Endothelial cell of umbilical vein (primary cell): ENCODE measurements at regions of chr13 and their contacts with region 1.

Region 1: DNA sequence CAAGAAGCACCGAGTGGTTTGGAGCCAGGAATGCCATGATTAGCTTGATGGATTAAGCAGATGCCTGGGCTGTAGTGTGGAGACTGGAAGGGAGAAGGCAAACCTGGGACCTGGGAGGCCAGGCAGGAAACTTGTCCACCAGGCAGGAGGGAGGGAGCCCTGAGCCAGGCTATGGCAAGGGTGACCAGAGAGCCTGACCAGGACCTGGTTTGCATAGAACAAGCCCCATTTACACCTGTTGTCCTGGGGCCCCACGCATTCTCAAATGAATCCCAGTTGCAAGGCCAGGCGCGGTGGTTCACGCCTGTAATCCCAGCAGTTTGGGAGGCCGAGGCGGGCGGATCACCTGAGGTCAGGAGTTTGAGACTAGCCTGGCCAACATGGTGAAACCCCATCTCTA is 50.2 kb upstream of the LATS2 start:
- DNase-seq: no peak
- H3K4me3 ChIP-seq: no peak overlapping the region
- H3K27ac ChIP-seq: no peak overlapping the region
- H3K4me1 ChIP-seq: no peaks in the 10 kb centered on the region
- H3K27me3 ChIP-seq: no peaks in the 10 kb centered on the region
- CTCF ChIP-seq: no peak
- POLR2A ChIP-seq: no peak

Region 2: DNA sequence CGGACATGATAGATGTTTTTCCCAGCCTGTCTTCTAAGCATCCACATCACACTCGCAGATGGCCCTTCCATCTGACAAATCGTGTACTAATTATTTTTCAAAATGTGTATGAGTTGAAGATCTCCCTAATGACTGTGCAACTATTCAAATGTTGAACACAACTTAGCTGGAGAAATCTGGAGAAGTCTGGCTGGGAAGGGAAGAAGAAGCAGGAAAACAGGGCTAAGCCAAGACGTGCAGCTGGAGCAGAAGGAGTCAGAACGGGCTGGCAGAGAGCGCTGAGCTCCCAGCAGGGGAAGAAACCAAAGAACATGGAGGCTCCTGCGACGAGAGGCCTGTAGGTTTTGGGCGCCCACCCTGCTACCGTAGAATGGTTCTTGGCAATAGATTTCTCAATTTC is 37.0 kb before region 1 on chr13:
- CTCF ChIA-PET with region 1: no interaction called
- POLR2A ChIA-PET with region 1: no interaction called
- dilution Hi-C with region 1: no loop called
- intact Hi-C with region 1: no loop called
- DNase-seq: peak; percentile 51
- H3K4me3 ChIP-seq: no peak overlapping the region
- H3K27ac ChIP-seq: peak overlapping the region; percentile 95
- H3K4me1 ChIP-seq: peaks cover 27% of the 10 kb centered on the region
- H3K27me3 ChIP-seq: no peaks in the 10 kb centered on the region
- CTCF ChIP-seq: no peak
- POLR2A ChIP-seq: no peak

Region 3: DNA sequence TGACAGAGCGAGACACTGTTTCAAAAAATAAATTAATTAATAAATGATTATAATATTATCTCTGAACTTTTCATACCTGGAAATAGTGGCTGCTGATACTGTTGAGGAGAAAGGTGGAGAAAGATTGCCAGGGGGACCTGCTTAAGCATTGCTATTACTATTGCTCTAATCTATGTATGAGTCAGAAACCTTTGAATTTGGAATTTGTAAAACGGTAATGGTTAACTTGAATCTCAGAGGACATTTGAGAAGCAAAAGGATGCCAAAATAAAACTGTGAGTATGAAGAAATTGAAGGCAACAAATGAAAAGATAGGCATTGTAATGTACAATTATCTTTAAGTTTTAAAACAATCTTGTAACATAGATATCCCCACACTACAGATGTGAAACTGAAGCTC is 70.1 kb after region 1 on chr13:
- CTCF ChIA-PET with region 1: interaction called, 9 read pairs
- POLR2A ChIA-PET with region 1: no interaction called
- dilution Hi-C with region 1: no loop called
- intact Hi-C with region 1: loop called (anchors 2 kb)
- DNase-seq: no peak
- H3K4me3 ChIP-seq: no peak overlapping the region
- H3K27ac ChIP-seq: no peak overlapping the region
- H3K4me1 ChIP-seq: peaks cover 6% of the 10 kb centered on the region
- H3K27me3 ChIP-seq: no peaks in the 10 kb centered on the region
- CTCF ChIP-seq: no peak
- POLR2A ChIP-seq: no peak

Region 4: GRCh38 chr13:21395953-21396352 is 284.4 kb after region 1 on chr13:
- CTCF ChIA-PET with region 1: no interaction called
- POLR2A ChIA-PET with region 1: no interaction called
- dilution Hi-C with region 1: no loop called
- intact Hi-C with region 1: no loop called
- DNase-seq: no peak
- H3K4me3 ChIP-seq: no peak overlapping the region
- H3K27ac ChIP-seq: no peak overlapping the region
- H3K4me1 ChIP-seq: peaks cover 13% of the 10 kb centered on the region
- H3K27me3 ChIP-seq: no peaks in the 10 kb centered on the region
- CTCF ChIP-seq: no peak
- POLR2A ChIP-seq: no peak